B cell (primary cell): ENCODE measurements at regions of chr6 and their contacts with region 1.

Region 1: DNA sequence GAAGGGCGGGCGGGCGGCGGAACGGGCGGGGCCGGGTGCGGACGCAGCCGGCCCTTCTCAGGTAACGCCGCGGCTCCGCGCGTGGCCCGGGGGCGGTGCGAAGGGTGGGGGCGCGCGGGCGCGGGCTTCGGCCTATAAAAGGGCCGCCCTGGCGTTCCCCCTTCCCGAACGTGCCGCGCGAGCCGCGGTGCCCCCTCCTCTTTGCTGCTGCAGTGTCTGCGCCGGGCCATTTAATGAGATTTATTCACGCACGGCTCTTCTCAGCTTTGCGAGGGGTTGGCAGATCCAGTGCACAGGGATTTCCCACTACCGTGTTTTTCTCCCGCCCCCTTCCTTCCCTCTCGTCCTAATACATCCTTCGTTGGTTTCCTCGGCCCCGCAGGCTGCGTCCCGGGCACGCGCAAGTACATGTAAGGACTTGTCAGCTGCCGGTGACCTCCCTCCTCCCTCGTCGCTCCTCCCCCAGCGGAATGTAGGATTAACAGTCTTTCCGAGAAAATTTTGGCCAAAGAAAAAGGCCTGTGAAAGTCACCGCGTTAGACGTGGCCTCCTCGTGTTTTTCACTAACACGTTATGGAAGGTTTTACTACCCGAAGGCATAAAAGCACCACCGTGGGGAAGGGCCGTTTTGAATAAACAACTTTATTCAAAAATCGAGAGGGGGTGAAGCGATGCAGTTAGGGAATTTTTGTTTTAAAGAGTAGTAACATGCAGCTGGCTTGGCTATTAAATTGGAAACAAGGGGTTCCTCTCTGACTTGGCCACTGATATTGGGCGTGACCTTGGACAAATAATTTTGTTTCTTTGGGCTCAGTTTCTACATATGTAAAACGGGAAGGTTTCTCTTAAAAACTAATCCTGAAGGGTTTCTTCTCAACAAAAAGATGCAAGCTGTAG is 966 bp upstream of the REV3L start:
- DNase-seq: no peak
- ATAC-seq: peak; percentile 68
- H3K4me3 ChIP-seq: peak overlapping the region; percentile 72 to 97 (median 88)
- H3K4me3 Mint-ChIP-seq: peak overlapping the region; percentile 96
- H3K27ac ChIP-seq: peak overlapping the region; percentile 98 to 99
- H3K27ac Mint-ChIP-seq: peak overlapping the region; percentile 99
- H3K4me1 ChIP-seq: peaks cover 16 to 18% of the 10 kb centered on the region in 2 donors
- H3K4me1 Mint-ChIP-seq: peaks cover 45% of the 10 kb centered on the region
- H3K27me3 ChIP-seq: no peaks in the 10 kb centered on the region
- H3K27me3 Mint-ChIP-seq: no peaks in the 10 kb centered on the region
- CTCF ChIP-seq: no peak

Region 2: GRCh38 chr6:110981202-110981600 is 502.8 kb before region 1 on chr6:
- CTCF ChIA-PET with region 1: no interaction called
- POLR2A ChIA-PET with region 1: no interaction called
- intact Hi-C with region 1: loop called (anchors 5 kb)
- DNase-seq: peak; percentile 43
- ATAC-seq: no peak
- H3K4me3 ChIP-seq: peak overlapping the region; percentile 73 to 98 (median 87)
- H3K4me3 Mint-ChIP-seq: peak overlapping the region; percentile 98
- H3K27ac ChIP-seq: peak overlapping the region; percentile 77 to 93
- H3K27ac Mint-ChIP-seq: peak overlapping the region; percentile 99
- H3K4me1 ChIP-seq: peaks cover 13 to 18% of the 10 kb centered on the region in 2 donors
- H3K4me1 Mint-ChIP-seq: peaks cover 34% of the 10 kb centered on the region
- H3K27me3 ChIP-seq: no peaks in the 10 kb centered on the region
- H3K27me3 Mint-ChIP-seq: no peaks in the 10 kb centered on the region
- CTCF ChIP-seq: no peak

Region 3: DNA sequence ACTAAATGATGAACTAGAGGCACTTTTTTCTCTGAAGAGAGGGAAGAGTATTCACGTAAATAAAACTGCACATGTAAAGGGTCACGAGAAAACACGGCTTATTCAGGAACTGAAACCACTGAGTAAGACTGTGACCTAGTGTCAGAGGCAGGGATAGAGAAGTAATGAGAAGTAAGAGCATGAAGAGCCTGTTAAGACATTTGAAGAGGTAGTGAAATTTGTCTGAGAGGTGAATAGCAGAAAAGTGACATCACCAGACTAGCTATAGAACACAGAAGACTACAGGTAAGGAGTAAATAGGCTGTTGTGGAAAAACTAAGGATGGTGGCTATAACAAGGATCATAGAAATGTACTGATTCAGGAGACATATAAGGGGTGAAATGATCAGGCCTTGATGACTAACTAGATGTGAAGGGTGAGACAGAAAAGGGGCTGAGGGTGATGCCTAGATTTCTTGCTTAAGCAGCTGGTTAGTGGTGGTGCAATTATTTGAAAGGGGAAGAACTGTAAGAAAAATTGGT is 77.7 kb before region 1 on chr6:
- CTCF ChIA-PET with region 1: interaction called, 22 read pairs
- POLR2A ChIA-PET with region 1: interaction called, 6 read pairs
- intact Hi-C with region 1: loop called (anchors 1 kb)
- DNase-seq: peak; percentile 93
- ATAC-seq: peak; percentile 97
- H3K4me3 ChIP-seq: no peak overlapping the region
- H3K4me3 Mint-ChIP-seq: peak overlapping the region; percentile 64
- H3K27ac ChIP-seq: peak overlapping the region; percentile 73 to 94
- H3K27ac Mint-ChIP-seq: peak overlapping the region; percentile 85
- H3K4me1 ChIP-seq: peaks cover 15 to 17% of the 10 kb centered on the region in 2 donors
- H3K4me1 Mint-ChIP-seq: peaks cover 27% of the 10 kb centered on the region
- H3K27me3 ChIP-seq: no peaks in the 10 kb centered on the region
- H3K27me3 Mint-ChIP-seq: no peaks in the 10 kb centered on the region
- CTCF ChIP-seq: no peak

Region 4: DNA sequence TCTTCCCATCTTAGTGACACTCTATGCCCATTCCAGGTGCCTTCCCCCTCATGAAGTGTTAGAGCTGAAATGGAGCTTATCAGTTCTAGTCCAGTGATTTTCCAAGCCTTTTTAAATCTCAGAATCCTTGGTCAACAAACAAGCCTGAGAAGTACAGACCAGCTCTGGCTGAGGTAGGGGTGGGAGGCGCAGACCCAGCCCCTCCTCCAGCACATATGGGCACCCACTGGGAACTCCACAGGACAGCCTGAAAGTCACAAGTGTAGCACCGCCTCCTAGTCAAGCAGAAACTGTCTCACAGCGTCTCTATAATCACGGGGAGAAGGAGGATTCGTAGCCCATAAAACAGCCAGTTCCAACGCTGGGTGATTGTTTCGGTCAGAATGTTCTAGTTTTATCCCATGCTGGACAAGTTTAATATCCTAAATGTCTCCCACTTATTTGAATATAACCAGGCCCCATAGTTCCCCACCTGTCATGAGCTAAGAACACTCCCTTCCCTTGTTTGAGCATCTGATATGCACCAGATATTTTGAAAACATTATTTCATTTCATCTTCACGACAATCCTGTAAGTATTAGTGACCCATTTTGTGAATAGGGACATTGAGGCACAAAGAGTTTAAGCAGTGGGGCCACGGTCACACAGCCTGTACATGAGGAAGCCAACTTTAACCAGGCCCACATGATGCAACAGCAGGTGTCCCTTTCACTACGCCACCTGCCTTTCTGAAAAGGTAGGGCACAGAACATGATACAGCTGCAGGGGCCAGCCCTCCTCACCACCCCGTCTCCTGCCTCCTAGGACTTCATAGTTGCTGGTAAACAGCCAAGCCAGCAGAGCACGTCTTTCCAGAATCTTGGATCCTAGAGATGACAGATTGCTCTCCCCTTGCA is 81.6 kb after region 1 on chr6:
- CTCF ChIA-PET with region 1: interaction called, 6 read pairs
- POLR2A ChIA-PET with region 1: no interaction called
- intact Hi-C with region 1: loop called (anchors 5 kb)
- DNase-seq: peak; percentile 59
- ATAC-seq: peak; percentile 83
- H3K4me3 ChIP-seq: no peak overlapping the region
- H3K4me3 Mint-ChIP-seq: no peak overlapping the region
- H3K27ac ChIP-seq: no peak overlapping the region
- H3K27ac Mint-ChIP-seq: peak overlapping the region; percentile 37
- H3K4me1 ChIP-seq: peaks cover 11 to 13% of the 10 kb centered on the region in 2 donors
- H3K4me1 Mint-ChIP-seq: peaks cover 22% of the 10 kb centered on the region
- H3K27me3 ChIP-seq: no peaks in the 10 kb centered on the region
- H3K27me3 Mint-ChIP-seq: no peaks in the 10 kb centered on the region
- CTCF ChIP-seq: peak; percentile 52

Region 5: GRCh38 chr6:111605100-111605751 is 121.2 kb after region 1 on chr6:
- CTCF ChIA-PET with region 1: interaction called, 8 read pairs
- POLR2A ChIA-PET with region 1: interaction called, 7 read pairs
- intact Hi-C with region 1: loop called (anchors 1 kb)
- DNase-seq: no peak
- ATAC-seq: peak; percentile 46
- H3K4me3 ChIP-seq: peak overlapping the region; percentile 60 to 89 (median 82)
- H3K4me3 Mint-ChIP-seq: peak overlapping the region; percentile 93
- H3K27ac ChIP-seq: peak overlapping the region; percentile 76 to 78
- H3K27ac Mint-ChIP-seq: peak overlapping the region; percentile 89
- H3K4me1 ChIP-seq: peaks cover 22 to 25% of the 10 kb centered on the region in 2 donors
- H3K4me1 Mint-ChIP-seq: peaks cover 44% of the 10 kb centered on the region
- H3K27me3 ChIP-seq: no peaks in the 10 kb centered on the region
- H3K27me3 Mint-ChIP-seq: no peaks in the 10 kb centered on the region
- CTCF ChIP-seq: no peak

Region 6: DNA sequence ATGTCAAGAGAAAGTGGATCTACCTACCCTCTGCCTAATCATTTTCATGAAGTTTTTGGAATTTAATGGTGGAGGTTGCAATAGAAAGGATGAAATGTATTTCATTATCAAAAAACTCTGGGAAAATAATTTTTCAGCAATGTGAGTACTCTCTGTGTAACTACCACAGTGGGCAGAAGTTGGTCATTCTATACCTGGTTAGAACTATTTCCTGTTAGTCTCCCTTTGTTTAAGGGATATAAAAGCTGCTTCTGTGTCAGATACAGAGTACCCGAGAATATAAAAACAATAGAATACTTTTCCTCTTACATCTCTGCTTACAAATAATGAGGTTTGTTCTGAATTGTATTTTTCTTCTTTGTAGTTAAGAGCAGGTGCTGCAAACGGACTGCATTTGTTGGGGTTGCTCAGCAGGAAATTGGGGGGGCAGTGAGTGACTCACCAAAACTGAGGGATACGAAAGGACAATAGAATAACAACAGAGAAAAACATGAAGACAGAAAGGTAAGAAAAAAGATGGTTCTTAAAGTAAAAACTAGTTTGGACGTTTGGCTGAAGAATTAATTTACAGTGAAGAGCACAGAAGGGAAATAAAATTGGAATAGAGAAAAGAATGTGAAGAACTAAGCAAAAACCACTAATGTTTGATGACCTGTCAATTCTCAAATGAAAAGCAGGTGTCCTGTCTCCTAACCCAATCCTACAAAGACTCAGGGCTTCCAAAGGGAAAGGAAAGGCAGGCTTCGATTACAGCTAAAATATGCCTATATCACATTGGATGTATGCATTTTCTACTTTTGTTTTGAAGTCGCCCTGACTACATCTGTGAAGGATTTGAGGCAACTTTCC is 1566.2 kb after region 1 on chr6:
- CTCF ChIA-PET with region 1: no interaction called
- POLR2A ChIA-PET with region 1: no interaction called
- intact Hi-C with region 1: no loop called
- DNase-seq: no peak
- ATAC-seq: no peak
- H3K4me3 ChIP-seq: no peak overlapping the region
- H3K4me3 Mint-ChIP-seq: no peak overlapping the region
- H3K27ac ChIP-seq: no peak overlapping the region
- H3K27ac Mint-ChIP-seq: no peak overlapping the region
- H3K4me1 ChIP-seq: no peaks in the 10 kb centered on the region
- H3K4me1 Mint-ChIP-seq: no peaks in the 10 kb centered on the region
- H3K27me3 ChIP-seq: no peaks in the 10 kb centered on the region
- H3K27me3 Mint-ChIP-seq: no peaks in the 10 kb centered on the region
- CTCF ChIP-seq: no peak